GM10248 (cell line): ENCODE measurements at regions of chr9 and their contacts with region 1.

Region 1: GRCh38 chr9:127199001-127199791 is 65.4 kb upstream of the GARNL3 start:
- DNase-seq: peak; percentile 88
- CTCF ChIP-seq: peak; percentile 92

Region 2: GRCh38 chr9:126902210-126902609 is 297.0 kb before region 1 on chr9:
- CTCF ChIA-PET with region 1: no interaction called
- POLR2A ChIA-PET with region 1: no interaction called
- DNase-seq: no peak
- CTCF ChIP-seq: no peak

Region 3: DNA sequence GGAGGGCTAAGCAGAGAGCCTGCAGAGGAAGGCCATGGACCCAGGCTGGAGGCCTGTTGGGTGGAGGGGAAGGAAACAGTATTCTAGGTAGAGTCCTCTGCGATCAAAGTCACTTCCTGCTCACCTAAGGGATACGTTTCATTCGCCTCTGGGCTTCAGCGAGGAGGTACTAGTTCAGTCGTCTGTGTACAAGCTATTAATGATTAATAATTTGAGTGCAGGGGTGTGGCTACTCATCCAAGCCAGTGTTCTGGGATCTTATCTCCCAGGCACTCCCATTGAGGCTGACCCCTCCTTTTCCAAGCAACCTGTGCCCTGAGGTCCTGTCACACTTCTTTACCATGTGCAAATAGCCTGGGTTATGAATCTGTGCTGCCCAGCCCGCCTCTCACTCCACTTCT is 259.4 kb before region 1 on chr9:
- CTCF ChIA-PET with region 1: interaction called, 200 read pairs
- POLR2A ChIA-PET with region 1: no interaction called
- DNase-seq: no peak
- CTCF ChIP-seq: no peak

Region 4: GRCh38 chr9:127014216-127014615 is 185.0 kb before region 1 on chr9:
- CTCF ChIA-PET with region 1: no interaction called
- POLR2A ChIA-PET with region 1: no interaction called
- DNase-seq: no peak
- CTCF ChIP-seq: no peak

Region 5: GRCh38 chr9:127166651-127167524 is 32.3 kb before region 1 on chr9:
- CTCF ChIA-PET with region 1: interaction called, 23 read pairs
- POLR2A ChIA-PET with region 1: interaction called, 5 read pairs
- DNase-seq: peak; percentile 77
- CTCF ChIP-seq: no peak

Region 6: DNA sequence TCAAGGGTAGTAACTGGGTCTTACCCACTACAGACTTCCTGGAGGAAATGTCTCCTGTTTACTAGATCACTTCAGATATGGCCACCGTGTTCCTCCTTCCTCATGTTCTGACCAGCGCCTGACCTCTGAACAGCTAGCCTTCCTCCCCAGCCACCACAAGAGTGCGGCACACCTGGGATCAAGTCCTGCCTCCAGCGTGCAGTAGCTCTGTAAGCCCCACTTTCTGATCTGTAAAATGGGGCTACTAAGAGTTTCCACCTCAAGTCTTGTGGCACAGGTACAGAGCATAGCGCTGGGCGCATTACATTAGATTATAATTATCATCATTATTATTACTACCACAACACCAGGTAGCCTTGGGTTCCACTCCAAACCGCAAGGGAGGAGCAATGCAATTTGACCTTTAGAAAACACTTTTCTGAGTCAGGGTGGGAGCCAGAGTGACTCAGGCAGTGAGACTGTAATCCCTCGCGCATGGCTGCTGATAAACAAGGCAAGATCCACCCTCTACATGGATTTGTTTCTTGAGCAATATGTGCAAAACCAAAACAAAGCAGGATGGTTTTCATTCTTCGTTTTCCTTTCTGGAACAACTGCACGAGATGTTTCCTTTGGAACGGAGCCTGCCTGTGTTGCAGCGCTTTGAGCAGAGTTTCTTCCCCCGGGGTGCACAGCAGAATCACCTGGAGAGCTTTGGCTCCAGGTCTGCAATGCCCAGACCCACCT is 11.8 kb before region 1 on chr9:
- CTCF ChIA-PET with region 1: interaction called, 50 read pairs
- POLR2A ChIA-PET with region 1: no interaction called
- DNase-seq: no peak
- CTCF ChIP-seq: no peak

Region 7: DNA sequence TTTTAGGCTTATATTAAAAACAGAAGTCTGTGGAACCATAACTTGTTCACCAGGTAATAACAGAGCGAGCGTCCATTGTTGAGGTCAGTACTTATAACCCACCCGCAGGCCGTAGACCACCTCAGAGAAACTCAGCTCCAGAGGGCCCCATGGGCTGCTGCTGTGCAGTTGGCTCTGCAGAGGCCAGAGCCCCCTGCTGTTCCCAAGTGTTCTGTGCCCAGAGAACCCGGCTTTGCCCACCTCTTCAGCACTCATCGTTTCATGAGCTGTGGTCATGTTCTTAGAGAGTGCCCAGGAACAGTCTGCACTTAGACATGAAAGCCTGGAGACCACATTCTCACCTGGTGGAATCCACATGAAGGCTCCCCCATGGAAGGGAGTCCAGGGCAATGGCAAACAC is 147.4 kb after region 1 on chr9:
- CTCF ChIA-PET with region 1: no interaction called
- POLR2A ChIA-PET with region 1: no interaction called
- DNase-seq: no peak
- CTCF ChIP-seq: no peak

Region 8: GRCh38 chr9:127396808-127397497 is 197.8 kb after region 1 on chr9 and contains the start of gene SLC2A8:
- CTCF ChIA-PET with region 1: no interaction called
- POLR2A ChIA-PET with region 1: no interaction called
- DNase-seq: peak; percentile 97
- CTCF ChIP-seq: no peak